Thyroid gland (tissue), 4 donors: ENCODE measurements at regions of chr10 and their contacts with region 1.

Region 1: GRCh38 chr10:44310762-44311562 is 73.9 kb downstream of the CXCL12 start:
- DNase-seq: peak; percentile 83 to 85
- H3K4me3 ChIP-seq: peak overlapping the region in 1 of 3 donors; percentile 13
- H3K27ac ChIP-seq: no peak overlapping the region
- H3K4me1 ChIP-seq: peaks cover 4 to 16% of the 10 kb centered on the region in 2 donors
- H3K27me3 ChIP-seq: no peaks in the 10 kb centered on the region
- CTCF ChIP-seq: peak; percentile 62 to 96 (median 87)
- POLR2A ChIP-seq: no peak

Region 2: DNA sequence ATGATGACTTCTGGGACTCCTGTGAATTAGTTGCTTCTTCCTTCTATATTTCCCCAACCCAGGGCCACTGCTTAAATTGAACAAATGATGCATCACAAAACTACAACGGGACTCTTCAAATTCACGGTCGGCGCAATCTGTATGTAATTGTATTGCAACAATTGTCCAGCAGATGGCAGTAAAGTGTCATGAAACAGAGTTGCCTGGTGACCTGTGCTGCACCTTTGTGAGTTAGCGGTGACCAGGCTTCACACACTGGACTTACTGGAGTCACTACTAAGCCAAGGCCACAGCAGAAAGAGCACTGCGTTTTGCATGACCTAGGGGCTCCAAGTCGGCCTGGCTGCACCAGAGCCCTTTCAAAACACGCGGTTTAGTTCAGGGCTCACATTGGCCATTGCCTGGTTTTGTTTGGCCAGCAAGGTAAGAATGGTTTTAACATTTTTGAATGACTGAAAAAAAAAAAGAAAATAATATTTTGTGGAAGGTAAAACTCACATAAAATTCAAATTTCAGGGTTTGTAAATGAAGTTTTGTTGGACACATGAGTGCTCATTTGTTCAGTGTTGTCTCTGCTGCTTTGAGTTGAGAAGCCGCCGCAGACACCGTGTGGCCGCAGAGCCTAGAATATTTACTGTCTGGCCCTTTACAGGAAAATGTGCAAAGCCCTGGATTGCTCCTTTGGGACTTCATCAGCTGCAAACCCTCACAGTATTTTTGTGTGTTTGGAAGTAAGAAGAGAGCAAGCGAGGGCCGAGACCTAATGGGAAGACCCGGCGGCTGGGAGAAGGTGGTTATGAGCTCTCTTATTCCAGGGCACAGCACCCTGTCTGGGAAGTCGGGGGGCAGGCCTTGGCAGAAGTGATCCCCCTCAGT is 639.1 kb before region 1 on chr10:
- intact Hi-C with region 1: loop called (anchors 5 kb)
- DNase-seq: peak; percentile 56 to 58
- H3K4me3 ChIP-seq: no peak overlapping the region
- H3K27ac ChIP-seq: no peak overlapping the region
- H3K4me1 ChIP-seq: peaks cover 10 to 13% of the 10 kb centered on the region in 2 donors
- H3K27me3 ChIP-seq: no peaks in the 10 kb centered on the region
- CTCF ChIP-seq: peak; percentile 53 to 88 (median 79)
- POLR2A ChIP-seq: no peak

Region 3: DNA sequence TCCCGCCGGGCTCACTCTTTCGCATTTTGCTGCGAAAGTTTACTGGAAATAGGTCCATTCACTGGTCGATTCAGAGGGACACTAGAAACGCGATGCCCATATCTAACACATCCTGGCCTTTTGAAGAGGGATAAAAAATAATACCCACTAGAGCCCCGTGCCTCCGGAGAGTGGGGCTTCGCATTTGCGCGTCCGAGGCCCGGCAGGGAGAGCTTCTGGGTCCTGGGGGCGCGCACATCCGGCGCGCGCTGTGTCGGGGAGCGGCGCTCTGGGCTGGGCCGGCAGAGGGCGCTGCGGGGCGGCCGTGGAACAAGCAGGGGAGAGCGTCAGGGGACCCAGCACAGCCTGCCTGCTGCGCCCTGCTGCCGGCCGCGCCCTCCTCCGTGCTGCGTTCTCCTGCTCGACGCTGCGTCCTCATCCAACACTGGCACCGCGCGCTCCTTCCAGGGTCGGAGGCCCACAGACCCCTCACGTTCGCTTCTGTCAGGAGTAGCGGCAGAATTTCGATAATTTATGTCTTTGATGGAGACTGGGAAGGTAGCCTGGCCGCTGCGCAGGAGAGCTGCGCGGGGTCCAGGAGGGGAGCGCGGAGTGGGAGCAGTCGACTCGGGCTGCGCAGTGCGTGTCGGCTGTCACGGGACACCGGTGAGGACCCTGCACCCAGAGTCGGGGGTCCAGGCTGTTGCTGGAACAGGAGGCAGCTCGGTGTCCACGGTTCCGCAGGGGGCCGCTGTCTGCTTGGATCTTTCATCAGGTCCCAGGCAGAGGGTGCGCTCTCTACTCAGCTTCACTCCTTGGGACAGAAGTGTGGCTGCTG is 620.8 kb before region 1 on chr10:
- intact Hi-C with region 1: loop called (anchors 5 kb)
- DNase-seq: peak; percentile 78 to 85
- H3K4me3 ChIP-seq: peak overlapping the region in 2 of 3 donors; percentile 45 to 53
- H3K27ac ChIP-seq: peak overlapping the region; percentile 61 to 82 (median 74)
- H3K4me1 ChIP-seq: peaks cover 10 to 29% of the 10 kb centered on the region in 2 donors
- H3K27me3 ChIP-seq: no peaks in the 10 kb centered on the region
- CTCF ChIP-seq: peak; percentile 63 to 93 (median 86)
- POLR2A ChIP-seq: peak in 1 of 2 donors; percentile 53

Region 4: DNA sequence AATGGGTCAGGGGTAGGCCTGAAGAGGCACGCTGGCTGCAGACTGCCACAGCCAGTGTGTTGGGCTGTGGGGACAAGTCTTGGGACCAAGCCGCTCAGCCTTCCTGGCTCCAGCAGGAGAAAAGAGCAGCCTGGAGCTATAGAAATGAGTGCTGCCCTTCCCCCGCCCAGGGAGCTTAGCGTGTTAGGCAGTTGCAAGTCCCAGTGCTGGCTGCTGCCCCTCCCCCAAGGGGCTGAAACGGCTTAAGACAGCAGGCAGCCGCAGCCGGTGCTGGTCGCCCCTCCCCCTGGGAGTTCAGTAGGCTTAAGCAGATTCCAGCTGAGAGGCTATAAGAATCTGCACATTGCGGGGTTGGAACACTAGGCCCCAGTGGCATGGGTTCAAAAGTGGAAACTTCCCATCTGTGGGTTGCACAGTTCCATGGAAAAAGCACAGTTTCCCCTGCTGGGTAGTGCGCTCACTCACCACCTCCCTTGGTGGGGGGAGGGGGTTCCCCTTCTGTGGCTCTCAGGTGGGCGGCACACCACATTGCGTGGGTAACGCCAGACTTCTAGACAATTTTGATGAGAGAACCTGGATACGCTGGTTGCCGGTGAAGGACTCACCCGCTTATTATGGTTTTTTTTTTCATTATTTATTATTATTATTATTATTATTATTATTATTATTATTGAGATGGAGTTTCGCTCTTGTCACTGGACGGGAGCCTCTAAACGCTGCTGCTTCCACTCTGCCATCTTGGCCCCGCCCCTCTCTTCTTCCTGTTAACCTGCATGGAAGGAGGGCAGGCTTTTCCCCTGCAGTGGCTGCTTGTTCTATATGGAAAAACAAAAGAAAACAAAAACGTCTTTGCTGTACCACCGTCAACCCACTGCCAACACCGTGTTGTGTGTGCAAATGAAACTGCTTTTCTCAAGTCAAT is 77.1 kb before region 1 on chr10:
- intact Hi-C with region 1: no loop called
- DNase-seq: peak in 1 of 2 donors; percentile 34
- H3K4me3 ChIP-seq: no peak overlapping the region
- H3K27ac ChIP-seq: no peak overlapping the region
- H3K4me1 ChIP-seq: no peaks in the 10 kb centered on the region
- H3K27me3 ChIP-seq: no peaks in the 10 kb centered on the region
- CTCF ChIP-seq: no peak
- POLR2A ChIP-seq: no peak

Region 5: DNA sequence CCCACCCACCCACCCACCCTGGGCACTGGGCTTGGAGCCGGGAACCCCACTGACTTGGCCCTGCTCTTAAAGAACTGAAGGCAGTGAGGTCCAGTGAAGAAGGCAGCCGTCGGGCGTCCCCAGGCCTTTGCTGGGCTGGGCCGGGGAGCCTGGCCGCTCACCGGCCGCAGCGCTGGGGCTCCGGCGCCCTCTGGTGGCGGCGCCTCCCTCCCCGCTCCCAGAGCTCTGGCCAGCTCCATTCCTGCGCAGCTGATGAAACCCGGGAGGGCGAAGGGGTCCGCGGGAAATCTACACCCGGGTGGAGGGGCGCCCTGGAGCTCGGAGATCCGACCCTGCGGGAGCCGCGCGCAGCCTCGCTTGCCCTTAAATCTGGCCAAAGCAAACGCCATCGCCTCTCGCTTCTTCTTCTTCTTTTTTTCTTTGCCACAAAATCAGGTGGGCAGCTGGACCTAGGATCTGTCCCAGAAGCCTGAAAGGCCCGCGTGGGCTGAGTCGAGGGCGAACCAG is 75.6 kb after region 1 on chr10:
- intact Hi-C with region 1: loop called (anchors 5 kb)
- DNase-seq: peak; percentile 71 to 73
- H3K4me3 ChIP-seq: no peak overlapping the region
- H3K27ac ChIP-seq: no peak overlapping the region
- H3K4me1 ChIP-seq: peaks cover 19 to 30% of the 10 kb centered on the region in 2 donors
- H3K27me3 ChIP-seq: no peaks in the 10 kb centered on the region
- CTCF ChIP-seq: peak; percentile 70 to 96 (median 93)
- POLR2A ChIP-seq: no peak